GM12878 (cell line): ENCODE measurements at regions of chr11 and their contacts with region 1.

Region 1: GRCh38 chr11:117807482-117808327 is 10.7 kb upstream of the DSCAML1 start:
- DNase-seq: no peak
- ATAC-seq: peak; percentile 85
- H3K4me3 ChIP-seq: no peak overlapping the region
- H3K27ac ChIP-seq: no peak overlapping the region
- H3K4me1 ChIP-seq: peaks cover 17% of the 10 kb centered on the region
- H3K27me3 ChIP-seq: no peaks in the 10 kb centered on the region
- CTCF ChIP-seq: peak; percentile 86 to 91 (median 89)
- EP300 ChIP-seq: no peak
- POLR2A ChIP-seq: no peak
- RAD21 ChIP-seq: peak; percentile 95

Region 2: DNA sequence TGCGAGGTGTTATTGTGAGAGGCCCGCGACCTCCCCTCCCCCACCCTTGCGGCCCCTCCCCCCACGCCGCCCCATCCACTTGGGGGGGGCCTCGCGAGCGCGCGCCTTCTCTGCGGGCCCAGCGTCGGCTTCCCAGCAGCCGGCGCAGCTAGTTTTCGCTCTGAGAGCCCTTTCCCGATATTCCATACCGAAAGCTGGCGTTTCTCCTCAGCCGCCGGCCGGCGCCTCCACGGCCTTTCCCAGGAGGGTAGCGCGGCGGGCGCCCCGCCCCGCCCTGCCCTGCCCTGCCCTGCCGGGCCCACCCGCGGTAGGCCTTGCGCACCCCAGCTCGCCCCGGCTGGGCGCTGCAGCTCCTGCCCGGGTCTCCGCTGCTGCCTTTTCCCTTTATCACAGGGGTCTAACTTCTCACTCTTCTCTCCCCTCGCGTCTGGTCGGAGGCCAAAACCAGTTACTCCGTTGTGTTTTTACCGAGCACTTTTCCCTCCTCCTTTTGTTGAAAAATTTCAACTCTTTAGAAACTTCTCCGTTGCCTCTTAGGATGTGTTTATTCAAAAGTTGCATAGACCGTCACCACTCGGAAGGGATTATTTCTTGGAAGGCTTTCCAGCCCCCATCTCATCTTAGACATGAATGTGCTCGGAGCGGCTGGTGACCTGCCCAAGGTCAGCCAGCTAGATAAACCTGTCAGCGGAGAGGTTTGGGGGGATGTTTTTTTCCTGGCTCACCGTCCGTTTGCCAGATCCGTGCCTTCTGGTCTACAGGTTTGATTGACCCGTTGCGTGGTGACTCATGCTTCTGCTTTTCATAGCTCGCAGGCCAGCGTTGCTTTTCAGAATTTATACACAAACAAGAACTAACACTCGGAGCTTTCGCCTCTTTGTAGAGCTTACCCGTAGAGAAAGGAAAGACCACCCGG is 663.0 kb before region 1 on chr11:
- CTCF ChIA-PET with region 1: no interaction called
- POLR2A ChIA-PET with region 1: no interaction called
- RAD21 ChIA-PET with region 1: no interaction called
- SMC1A ChIA-PET with region 1: no interaction called
- in situ Hi-C with region 1: no loop called
- intact Hi-C with region 1: no loop called
- DNase-seq: no peak
- ATAC-seq: peak; percentile 82
- H3K4me3 ChIP-seq: peak overlapping the region; percentile 92
- H3K27ac ChIP-seq: peak overlapping the region; percentile 80
- H3K4me1 ChIP-seq: peaks cover 7% of the 10 kb centered on the region
- H3K27me3 ChIP-seq: no peaks in the 10 kb centered on the region
- CTCF ChIP-seq: no peak
- EP300 ChIP-seq: no peak
- POLR2A ChIP-seq: no peak
- RAD21 ChIP-seq: no peak

Region 3: GRCh38 chr11:117690484-117691217 is 117.1 kb before region 1 on chr11:
- CTCF ChIA-PET with region 1: interaction called, 12 read pairs
- POLR2A ChIA-PET with region 1: no interaction called
- RAD21 ChIA-PET with region 1: interaction called, 3 read pairs
- SMC1A ChIA-PET with region 1: interaction called, 4 read pairs
- in situ Hi-C with region 1: no loop called
- intact Hi-C with region 1: no loop called
- DNase-seq: peak; percentile 27
- ATAC-seq: peak; percentile 70
- H3K4me3 ChIP-seq: no peak overlapping the region
- H3K27ac ChIP-seq: no peak overlapping the region
- H3K4me1 ChIP-seq: no peaks in the 10 kb centered on the region
- H3K27me3 ChIP-seq: peaks cover 0 to 3% of the 10 kb centered on the region in 2 experiments; a peak in 1 of 4 replicates
- CTCF ChIP-seq: no peak
- EP300 ChIP-seq: no peak; a peak in 1 of 4 replicates
- POLR2A ChIP-seq: no peak
- RAD21 ChIP-seq: no peak

Region 4: GRCh38 chr11:117828611-117829368 is 21.1 kb after region 1 on chr11:
- CTCF ChIA-PET with region 1: interaction called, 100 read pairs
- POLR2A ChIA-PET with region 1: no interaction called
- RAD21 ChIA-PET with region 1: interaction called, 5 read pairs
- SMC1A ChIA-PET with region 1: interaction called, 15 read pairs
- in situ Hi-C with region 1: no loop called
- intact Hi-C with region 1: no loop called
- DNase-seq: no peak
- ATAC-seq: peak; percentile 92
- H3K4me3 ChIP-seq: no peak overlapping the region
- H3K27ac ChIP-seq: no peak overlapping the region; the same call in 1 of the 2 replicates
- H3K4me1 ChIP-seq: peaks cover 14% of the 10 kb centered on the region
- H3K27me3 ChIP-seq: no peaks in the 10 kb centered on the region
- CTCF ChIP-seq: no peak
- EP300 ChIP-seq: peak; percentile 34 to 54; a peak in 2 of 4 replicates
- POLR2A ChIP-seq: 0 out of 2 replicates have a peak, but pooled peaks have one; percentile 19
- RAD21 ChIP-seq: no peak

Region 5: GRCh38 chr11:117932067-117932370 is 124.3 kb after region 1 on chr11:
- CTCF ChIA-PET with region 1: interaction called, 18 read pairs
- POLR2A ChIA-PET with region 1: no interaction called
- RAD21 ChIA-PET with region 1: interaction called, 15 read pairs
- SMC1A ChIA-PET with region 1: interaction called, 10 read pairs
- in situ Hi-C with region 1: no loop called
- intact Hi-C with region 1: no loop called
- DNase-seq: peak; percentile 78
- ATAC-seq: peak; percentile 80
- H3K4me3 ChIP-seq: no peak overlapping the region
- H3K27ac ChIP-seq: no peak overlapping the region; the same call in 1 of the 2 replicates
- H3K4me1 ChIP-seq: peaks cover 40% of the 10 kb centered on the region
- H3K27me3 ChIP-seq: no peaks in the 10 kb centered on the region
- CTCF ChIP-seq: no peak
- EP300 ChIP-seq: peak in 1 of 2 experiments; percentile 57; a peak in 1 of 4 replicates
- POLR2A ChIP-seq: no peak
- RAD21 ChIP-seq: no peak

Region 6: DNA sequence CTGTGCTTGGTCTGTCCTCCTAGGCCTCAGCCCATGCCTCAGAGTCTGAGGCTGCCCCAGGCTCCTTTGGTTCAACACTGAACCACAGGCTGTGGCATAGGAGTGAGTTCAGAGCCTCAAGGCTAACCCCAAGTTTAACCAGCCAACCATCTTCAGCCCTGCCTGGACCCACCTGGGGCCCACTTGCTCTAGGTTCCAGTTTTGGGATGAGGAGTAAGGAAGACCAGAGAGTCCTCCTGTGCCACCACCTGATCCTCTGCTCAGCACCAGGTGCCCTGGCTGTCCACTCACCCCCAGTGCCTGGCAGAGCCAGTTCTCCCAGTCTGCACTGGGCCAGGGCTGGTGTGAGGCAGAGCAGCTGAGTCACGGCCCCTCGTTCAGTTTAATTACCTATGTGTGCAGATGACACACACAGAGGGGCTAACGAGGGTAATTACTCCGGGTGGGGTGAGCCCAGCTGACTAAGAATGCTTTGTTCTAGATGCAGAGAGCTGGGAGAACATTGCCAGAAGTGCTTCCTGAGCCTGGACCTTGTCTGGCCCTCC is 133.5 kb after region 1 on chr11:
- CTCF ChIA-PET with region 1: interaction called, 131 read pairs
- POLR2A ChIA-PET with region 1: interaction called, 4 read pairs
- RAD21 ChIA-PET with region 1: interaction called, 73 read pairs
- SMC1A ChIA-PET with region 1: interaction called, 64 read pairs
- in situ Hi-C with region 1: no loop called
- intact Hi-C with region 1: no loop called
- DNase-seq: no peak
- ATAC-seq: no peak
- H3K4me3 ChIP-seq: no peak overlapping the region
- H3K27ac ChIP-seq: no peak overlapping the region
- H3K4me1 ChIP-seq: peaks cover 24% of the 10 kb centered on the region
- H3K27me3 ChIP-seq: no peaks in the 10 kb centered on the region
- CTCF ChIP-seq: no peak
- EP300 ChIP-seq: no peak
- POLR2A ChIP-seq: no peak
- RAD21 ChIP-seq: no peak

Region 7: GRCh38 chr11:118046051-118046963 is 238.6 kb after region 1 on chr11:
- CTCF ChIA-PET with region 1: interaction called, 146 read pairs
- POLR2A ChIA-PET with region 1: interaction called, 4 read pairs
- RAD21 ChIA-PET with region 1: interaction called, 52 read pairs
- SMC1A ChIA-PET with region 1: interaction called, 65 read pairs
- in situ Hi-C with region 1: no loop called
- intact Hi-C with region 1: no loop called
- DNase-seq: peak; percentile 44
- ATAC-seq: peak; percentile 88
- H3K4me3 ChIP-seq: no peak overlapping the region
- H3K27ac ChIP-seq: no peak overlapping the region
- H3K4me1 ChIP-seq: peaks cover 20% of the 10 kb centered on the region
- H3K27me3 ChIP-seq: no peaks in the 10 kb centered on the region
- CTCF ChIP-seq: no peak
- EP300 ChIP-seq: no peak
- POLR2A ChIP-seq: no peak
- RAD21 ChIP-seq: no peak

Region 8: GRCh38 chr11:118171269-118172062 is 363.8 kb after region 1 on chr11:
- CTCF ChIA-PET with region 1: interaction called, 10 read pairs
- POLR2A ChIA-PET with region 1: no interaction called
- RAD21 ChIA-PET with region 1: interaction called, 7 read pairs
- SMC1A ChIA-PET with region 1: interaction called, 3 read pairs
- in situ Hi-C with region 1: no loop called
- intact Hi-C with region 1: no loop called
- DNase-seq: no peak
- ATAC-seq: peak; percentile 91
- H3K4me3 ChIP-seq: no peak overlapping the region
- H3K27ac ChIP-seq: no peak overlapping the region
- H3K4me1 ChIP-seq: no peaks in the 10 kb centered on the region
- H3K27me3 ChIP-seq: peaks cover 0 to 3% of the 10 kb centered on the region in 2 experiments; a peak in 2 of 4 replicates
- CTCF ChIP-seq: peak; percentile 86 to 93 (median 88)
- EP300 ChIP-seq: no peak
- POLR2A ChIP-seq: no peak
- RAD21 ChIP-seq: peak; percentile 66